Pancreas (tissue), 10 donors: ENCODE measurements at regions of chr22 and their contacts with region 1.

Region 1: DNA sequence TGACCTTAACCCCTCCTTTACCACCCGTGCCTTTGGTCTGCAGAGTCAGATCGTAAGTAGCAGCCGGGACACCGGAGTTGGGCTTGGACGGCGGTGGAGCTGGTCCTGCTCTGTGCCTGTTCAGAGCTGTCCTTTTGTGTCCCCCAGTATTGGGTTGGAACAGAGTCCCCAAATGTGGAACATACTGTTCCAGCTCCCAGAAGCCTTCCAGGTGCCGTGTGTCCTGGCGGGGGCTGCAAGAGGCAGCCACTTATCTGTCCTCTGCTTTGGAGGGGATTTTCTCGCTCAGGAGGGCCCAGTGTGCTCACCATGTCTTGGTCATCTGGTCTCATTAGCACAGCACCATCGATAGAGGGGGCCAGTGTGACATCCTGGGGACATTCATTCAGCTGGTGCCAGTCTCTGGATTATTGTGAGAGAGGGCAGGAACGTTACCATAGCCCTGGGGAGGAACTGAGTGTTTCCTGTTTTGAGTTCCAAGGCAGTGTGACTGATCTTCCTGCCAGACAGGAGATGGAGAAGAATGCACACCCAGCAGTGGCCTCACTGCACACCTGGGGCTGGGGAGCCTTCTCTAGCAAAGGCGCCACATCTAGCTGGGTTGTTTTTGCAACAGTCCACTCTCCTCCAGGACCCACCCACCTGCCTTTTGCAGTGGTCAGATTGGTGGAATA is 12.4 kb downstream of the CRELD2 start:
- DNase-seq: peak; percentile 68 to 87 (median 79)
- ATAC-seq: peak; percentile 58 to 77 (median 74)
- H3K4me3 ChIP-seq: no peak overlapping the region
- H3K27ac ChIP-seq: peak overlapping the region in 2 of 4 donors; percentile 30 to 45
- H3K4me1 ChIP-seq: peaks cover 13 to 15% (median 14%) of the 10 kb centered on the region in 3 donors
- H3K27me3 ChIP-seq: no peaks in the 10 kb centered on the region
- CTCF ChIP-seq: peak in 3 of 4 donors; percentile 40 to 58 (median 54)

Region 2: DNA sequence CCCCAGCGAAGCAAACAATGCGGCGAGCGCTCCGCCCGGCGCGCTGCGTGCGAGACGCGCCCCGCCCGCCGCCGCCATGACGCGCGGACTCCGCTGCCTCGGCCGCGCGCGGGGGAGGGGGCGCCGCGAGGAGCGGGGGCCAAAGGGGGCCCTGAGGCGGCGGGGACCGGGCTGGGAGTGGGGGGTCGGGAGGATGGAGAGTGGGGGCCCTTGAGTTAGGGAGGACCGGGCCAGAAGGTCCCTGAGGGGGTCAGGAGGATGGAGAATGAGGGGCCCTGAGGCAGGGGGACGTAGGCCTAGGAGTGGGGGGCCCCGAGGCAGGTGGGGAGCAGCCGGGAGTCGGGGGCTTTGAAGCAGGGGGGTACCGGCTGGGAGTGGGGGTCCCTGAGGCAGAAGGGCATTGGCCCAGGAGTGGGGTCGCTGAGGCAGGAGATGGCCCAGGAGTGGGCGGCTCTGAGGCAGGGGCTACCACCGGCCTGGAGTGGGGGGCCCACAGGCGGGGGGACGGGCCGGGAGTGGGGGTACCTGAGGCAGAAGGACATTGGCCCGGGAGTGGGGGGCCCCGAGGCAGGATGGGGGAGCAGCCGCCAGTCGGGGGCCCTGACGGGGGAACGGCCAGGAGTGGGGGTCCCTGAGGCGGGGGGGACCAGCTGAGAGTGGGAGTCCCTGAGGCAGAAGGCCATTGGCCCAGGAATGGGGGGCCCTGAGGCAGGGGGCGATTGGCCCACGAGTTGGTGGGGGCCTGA is 102.8 kb before region 1 on chr22 and contains the start of gene BRD1:
- intact Hi-C with region 1: no loop called
- DNase-seq: peak in 5 of 6 donors; percentile 57 to 86 (median 70)
- ATAC-seq: peak; percentile 59 to 81 (median 70)
- H3K4me3 ChIP-seq: peak within 1 kb of the TSS; percentile 53 to 88 (median 70)
- H3K27ac ChIP-seq: peak within 1 kb of the TSS; percentile 57 to 68 (median 64)
- H3K4me1 ChIP-seq: peaks cover 3 to 19% (median 18%) of the 10 kb centered on the region in 3 donors
- H3K27me3 ChIP-seq: no peaks in the 10 kb centered on the region
- CTCF ChIP-seq: no peak
- total RNA-seq, gene BRD1: 14.0 to 23.6 (median 15.8) TPM

Region 3: GRCh38 chr22:49992921-49993648 is 62.2 kb after region 1 on chr22:
- intact Hi-C with region 1: loop called in 1 of 3 experiments (anchors 5 kb)
- DNase-seq: peak in 5 of 6 donors; percentile 51 to 84 (median 70)
- ATAC-seq: peak; percentile 76 to 96 (median 92)
- H3K4me3 ChIP-seq: no peak overlapping the region
- H3K27ac ChIP-seq: no peak overlapping the region
- H3K4me1 ChIP-seq: no peaks in the 10 kb centered on the region
- H3K27me3 ChIP-seq: no peaks in the 10 kb centered on the region
- CTCF ChIP-seq: peak; percentile 23 to 55 (median 48)

Region 4: GRCh38 chr22:50112151-50113118 is 181.6 kb after region 1 on chr22:
- intact Hi-C with region 1: no loop called
- DNase-seq: no peak
- ATAC-seq: peak in 2 of 4 donors; percentile 50 to 51
- H3K4me3 ChIP-seq: no peak overlapping the region
- H3K27ac ChIP-seq: no peak overlapping the region
- H3K4me1 ChIP-seq: no peaks in the 10 kb centered on the region
- H3K27me3 ChIP-seq: no peaks in the 10 kb centered on the region
- CTCF ChIP-seq: no peak